Ascending aorta (tissue), 2 donors: ENCODE measurements at regions of chr1 and their contacts with region 1.

Region 1: DNA sequence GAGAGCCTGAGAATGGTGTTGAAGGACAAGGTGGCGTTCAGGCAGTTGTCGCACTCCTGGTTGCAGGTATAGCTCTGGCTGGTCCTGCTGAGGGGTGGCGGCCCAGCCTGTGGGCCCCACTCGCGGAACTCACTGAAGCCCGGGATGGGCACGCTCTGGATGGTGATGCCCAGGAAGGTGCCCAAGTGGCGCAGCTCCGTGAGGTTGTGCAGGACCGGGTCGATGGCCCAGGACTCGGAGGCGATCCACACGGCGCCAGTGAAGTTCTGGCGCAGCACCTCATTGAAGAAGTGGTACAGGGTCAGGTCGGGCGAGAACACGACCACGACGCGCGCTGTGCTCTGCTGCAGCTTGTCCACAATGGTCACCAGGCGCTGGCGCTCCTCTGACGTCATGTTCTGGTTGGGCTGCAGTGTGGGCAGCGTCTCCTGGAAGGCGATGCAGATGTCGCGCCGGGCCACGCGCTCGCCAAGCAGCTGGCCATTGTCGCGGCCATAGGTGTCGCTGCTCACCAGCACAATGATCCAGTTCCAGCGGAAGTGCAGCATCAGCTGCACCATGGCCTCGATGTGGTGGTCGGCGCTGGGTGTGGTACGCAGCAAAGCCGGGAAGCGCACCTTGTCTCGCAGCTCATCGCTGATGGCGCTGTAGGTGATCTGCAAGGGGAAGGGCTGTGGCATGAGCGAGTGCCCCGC is 5.0 kb downstream of the TAS1R2 start:
- DNase-seq: no peak
- H3K4me3 ChIP-seq: no peak overlapping the region
- H3K27ac ChIP-seq: no peak overlapping the region
- H3K4me1 ChIP-seq: no peaks in the 10 kb centered on the region
- H3K27me3 ChIP-seq: no peaks in the 10 kb centered on the region
- CTCF ChIP-seq: no peak

Region 2: GRCh38 chr1:18062180-18062579 is 792.3 kb before region 1 on chr1:
- intact Hi-C with region 1: loop called (anchors 10 kb)
- DNase-seq: no peak
- H3K4me3 ChIP-seq: no peak overlapping the region
- H3K27ac ChIP-seq: no peak overlapping the region
- H3K4me1 ChIP-seq: no peaks in the 10 kb centered on the region
- H3K27me3 ChIP-seq: no peaks in the 10 kb centered on the region
- CTCF ChIP-seq: no peak